ENCODE measurements at regions of chr7 and their contacts with region 1.

Region 1: DNA sequence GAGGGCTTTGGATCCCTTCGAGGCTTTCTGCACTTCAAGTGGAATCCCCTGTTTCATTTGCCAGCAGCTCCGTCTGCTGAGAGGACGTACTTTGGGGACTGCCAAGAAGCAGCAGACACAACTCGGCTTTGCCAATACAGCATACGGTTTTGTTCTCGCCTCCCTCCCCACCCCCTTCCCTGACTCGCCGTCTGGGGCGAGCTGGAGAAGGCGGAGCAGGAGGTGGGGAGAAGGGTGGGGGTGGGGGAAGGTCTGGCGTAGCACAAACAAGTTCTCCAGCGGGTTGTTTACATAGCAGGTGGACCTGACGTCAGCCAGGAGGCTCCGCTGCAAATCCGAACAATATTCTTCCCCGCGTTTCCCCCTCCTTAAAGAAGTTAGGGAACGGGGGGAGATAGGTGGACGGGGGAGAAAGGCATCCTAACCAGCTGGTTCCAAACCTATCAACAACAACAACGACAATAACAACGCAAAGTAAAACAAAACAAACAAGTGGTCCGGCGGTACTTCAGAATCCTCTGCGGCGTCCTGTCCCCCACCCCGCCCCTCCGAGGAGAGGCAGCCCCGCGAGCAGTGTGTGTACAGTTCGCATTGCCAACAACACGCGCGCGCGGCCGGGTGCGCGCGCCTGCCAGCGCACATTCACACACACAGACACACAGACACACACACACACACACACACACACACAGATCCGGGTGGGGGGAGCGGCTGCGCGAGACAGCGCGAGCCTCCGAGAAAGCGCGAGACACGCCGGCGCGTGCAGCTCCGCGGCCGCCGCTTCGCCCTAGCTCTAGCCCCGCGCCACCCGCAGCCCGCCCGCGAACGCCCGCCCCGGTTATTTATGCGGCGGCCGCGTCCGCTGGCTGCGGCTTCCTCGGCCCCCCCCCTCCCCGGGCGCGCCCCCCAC is 167.0 kb upstream of the PPP1R3A start:
- DNase-seq: peak in 1 of 2 experiments; percentile 26
- H3K4me3 ChIP-seq: peak overlapping the region; percentile 35
- H3K4me3 Mint-ChIP-seq: peak overlapping the region; percentile 78
- H3K27ac Mint-ChIP-seq: no peak overlapping the region
- H3K4me1 ChIP-seq: peaks cover 5% of the 10 kb centered on the region; the same call in 1 of the 2 replicates
- H3K4me1 Mint-ChIP-seq: peaks cover 6% of the 10 kb centered on the region
- H3K27me3 ChIP-seq: peaks cover 13% of the 10 kb centered on the region
- H3K27me3 Mint-ChIP-seq: peaks cover 31% of the 10 kb centered on the region
- CTCF ChIP-seq: no peak

Region 2: DNA sequence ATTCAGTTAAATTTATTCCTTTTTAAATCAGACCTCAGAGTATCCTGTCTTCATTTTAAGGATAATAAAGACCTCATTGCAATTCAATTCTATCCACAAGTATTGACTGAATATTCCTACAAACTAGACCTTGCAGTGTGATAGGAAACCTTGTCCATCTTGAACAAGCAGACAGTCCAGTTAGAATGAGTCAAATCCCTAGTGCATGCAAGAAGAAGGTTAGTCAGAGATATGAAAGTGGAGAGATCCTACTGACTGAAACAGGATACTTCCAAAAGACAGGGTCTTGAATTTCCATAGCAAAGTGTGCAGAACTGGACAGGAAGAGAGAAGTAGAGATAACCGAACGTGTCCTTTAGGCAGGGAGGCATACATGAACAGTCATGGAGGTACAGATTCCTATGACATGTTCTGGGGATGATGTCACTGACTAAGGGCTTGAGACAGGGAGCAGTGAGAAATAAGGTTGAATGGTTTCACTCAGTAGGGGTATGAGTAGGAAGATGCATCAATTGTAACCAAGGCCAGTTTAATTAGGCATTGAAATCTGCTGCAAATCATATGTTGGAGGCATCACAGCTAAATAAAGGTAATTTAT is 212.2 kb before region 1 on chr7:
- CTCF ChIA-PET with region 1: no interaction called
- POLR2A ChIA-PET with region 1: no interaction called
- intact Hi-C with region 1: no loop called
- DNase-seq: no peak
- H3K4me3 ChIP-seq: no peak overlapping the region
- H3K4me3 Mint-ChIP-seq: no peak overlapping the region
- H3K27ac Mint-ChIP-seq: no peak overlapping the region
- H3K4me1 ChIP-seq: no peaks in the 10 kb centered on the region
- H3K4me1 Mint-ChIP-seq: no peaks in the 10 kb centered on the region
- H3K27me3 ChIP-seq: no peaks in the 10 kb centered on the region
- H3K27me3 Mint-ChIP-seq: no peaks in the 10 kb centered on the region
- CTCF ChIP-seq: no peak

Region 3: DNA sequence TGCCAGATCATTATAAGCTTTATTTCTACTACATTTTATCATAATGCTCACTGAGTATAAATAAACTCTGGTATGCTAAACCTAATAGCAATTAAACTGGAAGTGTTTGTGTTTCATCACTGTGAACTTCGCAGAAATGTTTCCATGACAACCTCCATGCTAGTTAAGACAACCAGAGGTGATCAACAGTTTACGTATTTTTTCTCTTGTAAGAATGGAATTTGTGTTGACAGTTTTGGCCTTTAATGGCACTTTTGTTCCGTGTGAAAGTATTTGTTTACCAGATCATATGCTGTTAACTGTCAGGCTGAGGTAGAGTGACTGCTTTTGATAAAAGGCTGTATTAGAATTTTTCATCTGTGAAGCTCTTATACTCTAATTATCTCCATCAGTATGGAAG is 45.0 kb after region 1 on chr7:
- CTCF ChIA-PET with region 1: no interaction called
- POLR2A ChIA-PET with region 1: no interaction called
- intact Hi-C with region 1: no loop called
- DNase-seq: no peak
- H3K4me3 ChIP-seq: no peak overlapping the region
- H3K4me3 Mint-ChIP-seq: no peak overlapping the region
- H3K27ac Mint-ChIP-seq: no peak overlapping the region
- H3K4me1 ChIP-seq: no peaks in the 10 kb centered on the region
- H3K4me1 Mint-ChIP-seq: no peaks in the 10 kb centered on the region
- H3K27me3 ChIP-seq: no peaks in the 10 kb centered on the region
- H3K27me3 Mint-ChIP-seq: peaks cover 10% of the 10 kb centered on the region
- CTCF ChIP-seq: no peak

Region 4: DNA sequence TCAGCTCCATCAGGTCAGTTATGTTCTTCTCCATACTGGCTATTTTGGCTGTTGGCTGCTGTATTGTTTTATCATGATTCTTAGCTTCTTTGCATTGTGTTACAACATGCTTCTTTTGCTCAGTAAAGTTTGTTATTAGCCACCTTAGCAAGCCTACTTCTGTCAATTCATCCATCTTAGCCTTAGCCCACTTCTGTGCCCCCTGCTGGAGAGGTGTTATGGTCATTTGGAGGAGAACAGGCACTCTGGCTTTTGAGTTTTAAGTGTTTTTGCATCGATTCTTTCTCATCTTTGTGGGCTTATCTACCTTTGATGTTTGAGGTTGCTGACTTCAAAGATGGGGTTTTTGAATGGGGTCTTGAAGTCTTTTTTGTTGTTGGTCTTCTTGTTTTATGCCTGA is 124.1 kb after region 1 on chr7:
- CTCF ChIA-PET with region 1: interaction called, 4 read pairs
- POLR2A ChIA-PET with region 1: interaction called, 3 read pairs
- intact Hi-C with region 1: loop called (anchors 1 kb)
- DNase-seq: peak in 1 of 2 experiments; percentile 4
- H3K4me3 ChIP-seq: no peak overlapping the region
- H3K4me3 Mint-ChIP-seq: no peak overlapping the region
- H3K27ac Mint-ChIP-seq: no peak overlapping the region
- H3K4me1 ChIP-seq: no peaks in the 10 kb centered on the region
- H3K4me1 Mint-ChIP-seq: no peaks in the 10 kb centered on the region
- H3K27me3 ChIP-seq: no peaks in the 10 kb centered on the region
- H3K27me3 Mint-ChIP-seq: no peaks in the 10 kb centered on the region
- CTCF ChIP-seq: no peak

Region 5: GRCh38 chr7:114217026-114217425 is 131.2 kb after region 1 on chr7:
- CTCF ChIA-PET with region 1: interaction called, 4 read pairs
- POLR2A ChIA-PET with region 1: interaction called, 3 read pairs
- intact Hi-C with region 1: loop called (anchors 1 kb)
- DNase-seq: no peak
- H3K4me3 ChIP-seq: no peak overlapping the region
- H3K4me3 Mint-ChIP-seq: no peak overlapping the region
- H3K27ac Mint-ChIP-seq: no peak overlapping the region
- H3K4me1 ChIP-seq: no peaks in the 10 kb centered on the region
- H3K4me1 Mint-ChIP-seq: no peaks in the 10 kb centered on the region
- H3K27me3 ChIP-seq: no peaks in the 10 kb centered on the region
- H3K27me3 Mint-ChIP-seq: no peaks in the 10 kb centered on the region
- CTCF ChIP-seq: peak; percentile 21 to 27

Region 6: GRCh38 chr7:114405427-114405826 is 319.6 kb after region 1 on chr7:
- CTCF ChIA-PET with region 1: no interaction called
- POLR2A ChIA-PET with region 1: no interaction called
- intact Hi-C with region 1: loop called (anchors 1 kb)
- DNase-seq: peak in 1 of 2 experiments; percentile 14
- H3K4me3 ChIP-seq: no peak overlapping the region
- H3K4me3 Mint-ChIP-seq: no peak overlapping the region
- H3K27ac Mint-ChIP-seq: no peak overlapping the region
- H3K4me1 ChIP-seq: no peaks in the 10 kb centered on the region
- H3K4me1 Mint-ChIP-seq: no peaks in the 10 kb centered on the region
- H3K27me3 ChIP-seq: no peaks in the 10 kb centered on the region
- H3K27me3 Mint-ChIP-seq: peaks cover 7% of the 10 kb centered on the region
- CTCF ChIP-seq: peak; percentile 44 to 45

Region 7: DNA sequence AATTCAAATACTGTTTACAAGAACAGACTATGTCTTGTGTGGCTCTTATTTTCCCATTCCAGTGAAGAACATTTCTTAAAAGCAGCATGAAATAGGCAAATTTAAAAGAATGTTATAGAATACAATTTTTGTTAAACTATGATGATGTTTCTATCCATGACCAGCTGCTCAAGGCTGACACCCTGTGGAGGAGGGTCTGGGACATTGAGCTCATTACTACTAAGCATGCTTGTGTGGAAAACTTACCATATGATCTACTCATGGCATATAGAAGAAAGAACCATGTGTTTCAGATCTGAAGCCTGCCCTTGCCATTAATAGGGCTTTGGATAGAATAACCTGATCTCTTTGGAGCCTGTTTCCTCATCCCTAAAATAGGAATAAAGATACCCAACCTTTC is 453.7 kb after region 1 on chr7:
- CTCF ChIA-PET with region 1: interaction called, 34 read pairs
- POLR2A ChIA-PET with region 1: no interaction called
- intact Hi-C with region 1: loop called (anchors 1 kb)
- DNase-seq: peak; percentile 32 to 39
- H3K4me3 ChIP-seq: no peak overlapping the region
- H3K4me3 Mint-ChIP-seq: no peak overlapping the region
- H3K27ac Mint-ChIP-seq: no peak overlapping the region
- H3K4me1 ChIP-seq: no peaks in the 10 kb centered on the region
- H3K4me1 Mint-ChIP-seq: no peaks in the 10 kb centered on the region
- H3K27me3 ChIP-seq: no peaks in the 10 kb centered on the region
- H3K27me3 Mint-ChIP-seq: peaks cover 3% of the 10 kb centered on the region
- CTCF ChIP-seq: peak; percentile 17 to 65

Region 8: DNA sequence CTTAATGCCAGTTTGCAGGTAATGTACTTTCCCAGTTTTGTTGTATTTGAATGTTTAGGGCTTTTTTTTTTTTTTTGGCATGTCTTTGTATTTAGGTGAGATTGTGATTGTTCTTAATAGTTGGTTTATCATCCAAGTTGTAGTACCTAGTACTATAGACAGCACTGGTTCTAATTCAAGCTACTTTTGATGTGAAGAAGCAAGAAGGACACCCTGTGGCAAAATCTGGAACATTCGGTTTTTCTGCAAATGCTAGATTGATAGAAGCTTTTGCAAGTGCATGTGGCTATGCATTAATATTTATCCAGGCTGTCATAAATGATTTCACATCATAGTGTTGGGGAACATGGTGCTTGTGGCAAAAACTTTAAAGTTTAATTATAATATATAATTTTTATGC is 577.7 kb after region 1 on chr7:
- CTCF ChIA-PET with region 1: interaction called, 18 read pairs
- POLR2A ChIA-PET with region 1: no interaction called
- intact Hi-C with region 1: loop called (anchors 1 kb)
- DNase-seq: peak in 1 of 2 experiments; percentile 29
- H3K4me3 ChIP-seq: no peak overlapping the region
- H3K4me3 Mint-ChIP-seq: no peak overlapping the region
- H3K27ac Mint-ChIP-seq: no peak overlapping the region
- H3K4me1 ChIP-seq: no peaks in the 10 kb centered on the region
- H3K4me1 Mint-ChIP-seq: no peaks in the 10 kb centered on the region
- H3K27me3 ChIP-seq: no peaks in the 10 kb centered on the region
- H3K27me3 Mint-ChIP-seq: peaks cover 3% of the 10 kb centered on the region
- CTCF ChIP-seq: peak in 1 of 2 experiments; percentile 31